ENCODE measurements at regions of chr17 and their contacts with region 1.

Region 1: DNA sequence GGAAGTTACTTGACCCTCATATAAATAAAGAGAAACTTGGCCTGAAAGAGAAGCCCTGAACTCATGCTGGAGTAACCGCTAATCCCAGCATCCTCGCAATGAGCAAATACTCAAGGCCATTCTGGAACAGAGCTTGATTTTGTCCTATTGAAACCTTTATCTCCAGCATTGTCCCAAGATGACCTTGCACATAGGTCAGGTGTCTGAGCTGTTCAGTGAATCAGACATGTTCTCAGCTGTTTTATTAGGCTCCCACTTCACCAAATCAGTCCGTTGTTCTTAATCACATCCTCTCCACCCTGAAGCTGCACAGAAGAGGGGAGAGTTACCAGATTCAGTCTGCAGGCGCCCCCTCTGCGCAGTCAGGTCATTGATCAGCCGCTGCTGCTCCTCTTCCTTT is 9.1 kb upstream of the MYH1 start:
- DNase-seq: no peak
- H3K4me3 ChIP-seq: no peak overlapping the region
- H3K27ac ChIP-seq: no peak overlapping the region
- H3K4me1 ChIP-seq: no peaks in the 10 kb centered on the region
- H3K27me3 ChIP-seq: no peaks in the 10 kb centered on the region
- CTCF ChIP-seq: no peak
- POLR2A ChIP-seq: no peak

Region 2: DNA sequence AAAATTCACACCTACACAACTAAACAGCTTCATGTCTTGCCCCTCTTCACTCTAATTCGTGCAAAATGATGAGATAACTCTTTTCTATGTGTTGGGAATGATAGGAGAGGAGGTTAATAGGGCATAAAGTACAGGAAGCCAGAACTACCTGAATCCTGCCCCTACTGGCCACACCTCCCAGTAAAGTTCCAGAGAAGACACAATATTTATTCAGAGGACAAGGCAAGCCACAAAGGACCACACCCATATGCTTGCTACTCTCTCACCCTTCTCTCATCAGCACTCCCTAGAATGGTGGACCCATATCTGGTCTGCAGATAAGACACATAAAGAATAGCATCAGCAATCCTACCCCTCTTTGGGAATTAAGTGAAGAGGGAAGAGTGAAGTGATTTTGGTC is 1395.2 kb after region 1 on chr17:
- intact Hi-C with region 1: loop called (anchors 5 kb)
- DNase-seq: no peak
- H3K4me3 ChIP-seq: no peak overlapping the region
- H3K27ac ChIP-seq: no peak overlapping the region
- H3K4me1 ChIP-seq: no peaks in the 10 kb centered on the region
- H3K27me3 ChIP-seq: no peaks in the 10 kb centered on the region
- CTCF ChIP-seq: no peak
- POLR2A ChIP-seq: no peak

Measured in breast epithelium (tissue), 4 donors.